ENCODE measurements at regions of chr2 and their contacts with region 1.

Region 1: GRCh38 chr2:160630801-160631590 is 137.4 kb upstream of the RBMS1 start:
- DNase-seq: no peak
- H3K4me3 ChIP-seq: no peak overlapping the region
- H3K27ac ChIP-seq: no peak overlapping the region
- H3K4me1 ChIP-seq: no peaks in the 10 kb centered on the region
- H3K27me3 ChIP-seq: no peaks in the 10 kb centered on the region
- CTCF ChIP-seq: no peak
- POLR2A ChIP-seq: no peak

Region 2: GRCh38 chr2:160674146-160674750 is 43.3 kb after region 1 on chr2:
- intact Hi-C with region 1: loop called (anchors 2 kb)
- DNase-seq: no peak
- H3K4me3 ChIP-seq: no peak overlapping the region
- H3K27ac ChIP-seq: no peak overlapping the region
- H3K4me1 ChIP-seq: no peaks in the 10 kb centered on the region
- H3K27me3 ChIP-seq: no peaks in the 10 kb centered on the region
- CTCF ChIP-seq: no peak
- POLR2A ChIP-seq: no peak

Measured in breast epithelium (tissue), 4 donors.